GM23248 (cell line): ENCODE measurements at regions of chr6 and their contacts with region 1.

Region 1: GRCh38 chr6:142474531-142475289 is 172.9 kb downstream of the ADGRG6 start:
- DNase-seq: peak; percentile 65
- H3K4me3 ChIP-seq: 0 out of 2 replicates have a peak overlapping the region, but pooled peaks have one; percentile 3
- H3K27ac ChIP-seq: peak overlapping the region; percentile 4; the same call in 1 of the 2 replicates
- H3K4me1 ChIP-seq: peaks cover 5% of the 10 kb centered on the region; the same call in 1 of the 2 replicates
- H3K27me3 ChIP-seq: no peaks in the 10 kb centered on the region

Region 2: DNA sequence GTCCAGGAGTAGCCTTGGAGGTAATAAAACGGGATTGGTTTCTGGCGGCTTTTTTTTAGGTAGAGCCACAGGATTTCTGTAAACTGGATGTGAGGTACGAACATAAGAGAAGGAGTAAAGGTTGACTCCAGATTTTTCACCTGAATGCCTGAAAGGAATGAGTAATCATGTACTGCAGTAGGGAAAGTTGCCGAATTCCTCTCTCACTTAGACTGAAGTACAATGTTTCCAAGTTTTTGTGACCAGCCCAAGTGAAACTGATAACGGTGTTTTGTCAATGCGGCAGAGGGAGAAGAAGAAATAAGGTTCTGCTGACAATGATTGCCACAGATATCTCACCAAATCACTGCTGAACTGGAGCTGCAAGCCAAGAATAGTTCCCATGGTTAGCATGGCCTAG is 252.7 kb before region 1 on chr6:
- in situ Hi-C with region 1: no loop called
- DNase-seq: no peak
- H3K4me3 ChIP-seq: no peak overlapping the region
- H3K27ac ChIP-seq: no peak overlapping the region
- H3K4me1 ChIP-seq: no peaks in the 10 kb centered on the region
- H3K27me3 ChIP-seq: no peaks in the 10 kb centered on the region

Region 3: DNA sequence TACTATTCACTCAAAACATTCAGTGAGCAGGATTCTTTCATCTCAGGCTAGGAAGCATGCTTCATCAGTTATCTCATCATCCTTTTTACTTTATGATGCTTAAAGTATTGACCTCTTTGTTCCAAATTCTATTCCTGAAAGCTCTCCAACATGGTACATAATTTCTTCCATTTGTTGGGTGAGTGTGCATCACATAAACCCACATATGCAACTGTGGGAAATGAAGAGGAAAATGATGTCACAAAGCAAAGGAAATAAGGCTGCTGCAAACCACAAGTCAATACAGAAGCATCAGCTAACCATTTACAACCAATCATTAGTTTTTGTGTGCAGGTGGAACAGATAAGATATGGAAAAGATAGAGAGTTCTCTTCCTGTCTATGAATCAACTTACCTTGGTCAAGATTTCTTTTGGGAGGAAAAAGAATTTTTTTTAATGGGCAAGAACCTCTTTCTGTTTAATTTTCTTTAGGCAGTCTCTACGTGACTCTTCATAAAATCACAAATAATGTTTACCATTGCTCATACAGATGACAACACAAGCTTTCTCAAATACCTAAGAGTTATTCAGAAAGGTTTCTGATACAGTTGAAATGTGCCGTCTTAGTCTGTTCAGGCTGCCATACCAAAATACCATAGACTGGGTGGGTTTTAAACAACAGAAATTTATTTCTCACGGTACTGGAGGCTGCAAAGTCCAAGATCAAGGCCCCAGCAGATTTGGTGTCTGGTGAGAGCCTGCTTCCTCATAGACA is 87.0 kb after region 1 on chr6:
- in situ Hi-C with region 1: no loop called
- DNase-seq: no peak
- H3K4me3 ChIP-seq: no peak overlapping the region
- H3K27ac ChIP-seq: no peak overlapping the region
- H3K4me1 ChIP-seq: no peaks in the 10 kb centered on the region
- H3K27me3 ChIP-seq: 0 out of 2 replicates have a peak, but pooled peaks cover 4% of the 10 kb centered on the region

Region 4: GRCh38 chr6:142605922-142606485 is 131.3 kb after region 1 on chr6:
- in situ Hi-C with region 1: no loop called
- DNase-seq: peak; percentile 78
- H3K4me3 ChIP-seq: peak overlapping the region; percentile 46
- H3K27ac ChIP-seq: peak overlapping the region; percentile 45
- H3K4me1 ChIP-seq: peaks cover 14% of the 10 kb centered on the region
- H3K27me3 ChIP-seq: no peaks in the 10 kb centered on the region

Region 5: GRCh38 chr6:142679907-142680700 is 205.4 kb after region 1 on chr6:
- in situ Hi-C with region 1: loop called (anchors 10 kb)
- DNase-seq: peak; percentile 85
- H3K4me3 ChIP-seq: peak overlapping the region; percentile 38; the same call in 1 of the 2 replicates
- H3K27ac ChIP-seq: peak overlapping the region; percentile 46
- H3K4me1 ChIP-seq: peaks cover 18% of the 10 kb centered on the region
- H3K27me3 ChIP-seq: peaks cover 20% of the 10 kb centered on the region; the same call in 1 of the 2 replicates

Region 6: GRCh38 chr6:143427109-143427817 is 952.6 kb after region 1 on chr6:
- in situ Hi-C with region 1: loop called (anchors 25 kb)
- DNase-seq: peak; percentile 94
- H3K4me3 ChIP-seq: no peak overlapping the region
- H3K27ac ChIP-seq: no peak overlapping the region
- H3K4me1 ChIP-seq: peaks cover 13% of the 10 kb centered on the region
- H3K27me3 ChIP-seq: no peaks in the 10 kb centered on the region